ENCODE measurements at regions of chr12 and their contacts with region 1.

Region 1: GRCh38 chr12:96489103-96490056 is at the start of gene CFAP54:
- DNase-seq: peak; percentile 93
- ATAC-seq: peak; percentile 96 to 99 (median 99)
- H3K4me3 ChIP-seq: peak within 1 kb of the TSS; percentile 39 to 74 (median 65)
- H3K27ac ChIP-seq: peak within 1 kb of the TSS in 7 of 10 donors; percentile 5 to 62 (median 47)
- H3K4me1 ChIP-seq: peaks cover 0 to 23% (median 4%) of the 10 kb centered on the region in 9 donors
- H3K27me3 ChIP-seq: no peaks in the 10 kb centered on the region
- CTCF ChIP-seq: peak; percentile 67 to 96 (median 87)
- total RNA-seq, gene CFAP54: 0.08 to 0.35 (median 0.27) TPM in 9 of 10 donors, not detected in the other

Region 2: DNA sequence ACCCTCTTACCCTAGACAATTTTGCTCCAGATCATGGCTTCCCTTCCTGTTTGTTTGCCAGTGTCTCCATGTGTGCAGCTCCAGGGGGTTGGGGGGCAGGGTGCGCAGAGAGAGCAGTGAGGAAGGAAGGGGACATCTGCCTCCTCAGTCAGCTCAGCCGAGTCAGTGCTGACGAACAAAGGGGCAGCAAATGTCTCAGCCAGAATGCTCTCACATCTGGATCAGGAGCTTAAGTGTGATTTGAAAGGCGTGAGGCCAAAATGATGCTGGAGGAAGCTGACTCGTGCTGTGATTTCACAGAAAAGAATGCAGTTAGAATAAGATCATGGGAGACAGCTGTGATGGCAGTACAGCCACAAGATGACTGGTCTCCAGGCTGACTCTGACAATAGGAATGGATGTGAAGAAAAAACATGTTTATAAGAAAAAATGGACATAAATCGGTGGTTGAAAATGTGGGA is 62.1 kb before region 1 on chr12:
- intact Hi-C with region 1: loop called in 2 of 10 experiments (anchors 10 kb)
- DNase-seq: peak; percentile 51 to 80
- ATAC-seq: peak; percentile 80 to 98 (median 90)
- H3K4me3 ChIP-seq: no peak overlapping the region
- H3K27ac ChIP-seq: peak overlapping the region in 9 of 10 donors; percentile 45 to 91 (median 76)
- H3K4me1 ChIP-seq: peaks cover 0 to 38% (median 18%) of the 10 kb centered on the region in 9 donors
- H3K27me3 ChIP-seq: no peaks in the 10 kb centered on the region
- CTCF ChIP-seq: no peak

Region 3: GRCh38 chr12:96445691-96446583 is 43.4 kb before region 1 on chr12:
- intact Hi-C with region 1: loop called in 2 of 10 experiments (anchors 5 kb)
- DNase-seq: peak in 1 of 2 donors; percentile 69
- ATAC-seq: peak; percentile 91 to 97 (median 96)
- H3K4me3 ChIP-seq: peak overlapping the region in 1 of 10 donors; percentile 12
- H3K27ac ChIP-seq: peak overlapping the region; percentile 61 to 93 (median 84)
- H3K4me1 ChIP-seq: peaks cover 0 to 35% (median 16%) of the 10 kb centered on the region in 9 donors
- H3K27me3 ChIP-seq: no peaks in the 10 kb centered on the region
- CTCF ChIP-seq: no peak

Region 4: GRCh38 chr12:96454396-96454795 is 35.0 kb before region 1 on chr12:
- intact Hi-C with region 1: loop called in 2 of 10 experiments (anchors 5 kb)
- DNase-seq: no peak
- ATAC-seq: no peak
- H3K4me3 ChIP-seq: no peak overlapping the region
- H3K27ac ChIP-seq: no peak overlapping the region
- H3K4me1 ChIP-seq: peaks cover 0 to 3% (median 0%) of the 10 kb centered on the region in 9 donors
- H3K27me3 ChIP-seq: no peaks in the 10 kb centered on the region
- CTCF ChIP-seq: no peak

Measured in heart right ventricle (tissue), 16 donors.